Naive thymus-derived CD4-positive, alpha-beta T cell (primary cell): ENCODE measurements at regions of chr11 and their contacts with region 1.

Region 1: GRCh38 chr11:94493281-94494125 is at the starts of genes ANKRD49 and MRE11:
- DNase-seq: peak; percentile 92 to 98 (median 97)
- ATAC-seq: peak; percentile 100
- H3K4me3 ChIP-seq: peak within 1 kb of the TSS; percentile 94
- H3K4me3 Mint-ChIP-seq: peak within 1 kb of the TSS; percentile 92 to 99 (median 96)
- H3K27ac ChIP-seq: peak within 1 kb of the TSS; percentile 93
- H3K27ac Mint-ChIP-seq: peak within 1 kb of the TSS; percentile 91 to 99 (median 97)
- H3K4me1 ChIP-seq: peaks cover 18 to 28% of the 10 kb centered on the region in 2 donors
- H3K4me1 Mint-ChIP-seq: peaks cover 31 to 64% (median 42%) of the 10 kb centered on the region in 7 donors
- H3K27me3 ChIP-seq: no peaks in the 10 kb centered on the region
- H3K27me3 Mint-ChIP-seq: no peaks in the 10 kb centered on the region
- total RNA-seq, gene ANKRD49: 25.6 to 64.4 (median 44.5) TPM
- total RNA-seq, gene MRE11: 19.0 to 45.5 (median 40.1) TPM

Region 2: GRCh38 chr11:93197380-93198214 is 1295.9 kb before region 1 on chr11 and contains the start of gene SLC36A4:
- CTCF ChIA-PET with region 1: no interaction called
- POLR2A ChIA-PET with region 1: interaction called, 3 read pairs
- intact Hi-C with region 1: loop called (anchors 1 to 5 kb)
- DNase-seq: peak; percentile 78 to 90 (median 88)
- ATAC-seq: peak; percentile 94
- H3K4me3 ChIP-seq: peak within 1 kb of the TSS; percentile 54
- H3K4me3 Mint-ChIP-seq: peak within 1 kb of the TSS; percentile 88 to 98 (median 95)
- H3K27ac ChIP-seq: peak within 1 kb of the TSS; percentile 96
- H3K27ac Mint-ChIP-seq: peak within 1 kb of the TSS; percentile 87 to 99 (median 97)
- H3K4me1 ChIP-seq: peaks cover 0 to 4% of the 10 kb centered on the region in 2 donors
- H3K4me1 Mint-ChIP-seq: peaks cover 15 to 40% (median 30%) of the 10 kb centered on the region in 7 donors
- H3K27me3 ChIP-seq: no peaks in the 10 kb centered on the region
- H3K27me3 Mint-ChIP-seq: peaks cover 0 to 24% (median 5%) of the 10 kb centered on the region in 5 donors
- total RNA-seq, gene SLC36A4: 12.0 to 22.0 (median 20.0) TPM

Region 3: GRCh38 chr11:93741094-93741881 is 752.2 kb before region 1 on chr11 and contains the starts of genes C11orf54 and TAF1D:
- CTCF ChIA-PET with region 1: no interaction called
- POLR2A ChIA-PET with region 1: interaction called, 12 read pairs
- intact Hi-C with region 1: loop called (anchors 1 kb)
- DNase-seq: peak; percentile 85 to 98 (median 96)
- ATAC-seq: peak; percentile 96
- H3K4me3 ChIP-seq: peak within 1 kb of the TSS; percentile 88
- H3K4me3 Mint-ChIP-seq: peak within 1 kb of the TSS; percentile 95 to 100 (median 100)
- H3K27ac ChIP-seq: peak within 1 kb of the TSS; percentile 84
- H3K27ac Mint-ChIP-seq: peak within 1 kb of the TSS; percentile 98 to 100 (median 100)
- H3K4me1 ChIP-seq: peaks cover 28 to 31% of the 10 kb centered on the region in 2 donors
- H3K4me1 Mint-ChIP-seq: peaks cover 37 to 92% (median 71%) of the 10 kb centered on the region in 7 donors
- H3K27me3 ChIP-seq: no peaks in the 10 kb centered on the region
- H3K27me3 Mint-ChIP-seq: peaks cover 0 to 3% (median 0%) of the 10 kb centered on the region in 5 donors
- total RNA-seq, gene C11orf54: 16.4 to 42.5 (median 27.2) TPM
- total RNA-seq, gene TAF1D: 116 to 197 (median 183) TPM

Region 4: GRCh38 chr11:94020777-94021481 is 472.6 kb before region 1 on chr11 and contains the start of gene HEPHL1:
- CTCF ChIA-PET with region 1: no interaction called
- POLR2A ChIA-PET with region 1: no interaction called
- intact Hi-C with region 1: no loop called
- DNase-seq: no peak
- ATAC-seq: no peak
- H3K4me3 ChIP-seq: no peak within 1 kb of the TSS
- H3K4me3 Mint-ChIP-seq: no peak within 1 kb of the TSS
- H3K27ac ChIP-seq: no peak within 1 kb of the TSS
- H3K27ac Mint-ChIP-seq: no peak within 1 kb of the TSS
- H3K4me1 ChIP-seq: no peaks in the 10 kb centered on the region
- H3K4me1 Mint-ChIP-seq: no peaks in the 10 kb centered on the region
- H3K27me3 ChIP-seq: no peaks in the 10 kb centered on the region
- H3K27me3 Mint-ChIP-seq: peaks cover 0 to 20% (median 0%) of the 10 kb centered on the region in 5 donors
- total RNA-seq, gene HEPHL1: not detected

Region 5: DNA sequence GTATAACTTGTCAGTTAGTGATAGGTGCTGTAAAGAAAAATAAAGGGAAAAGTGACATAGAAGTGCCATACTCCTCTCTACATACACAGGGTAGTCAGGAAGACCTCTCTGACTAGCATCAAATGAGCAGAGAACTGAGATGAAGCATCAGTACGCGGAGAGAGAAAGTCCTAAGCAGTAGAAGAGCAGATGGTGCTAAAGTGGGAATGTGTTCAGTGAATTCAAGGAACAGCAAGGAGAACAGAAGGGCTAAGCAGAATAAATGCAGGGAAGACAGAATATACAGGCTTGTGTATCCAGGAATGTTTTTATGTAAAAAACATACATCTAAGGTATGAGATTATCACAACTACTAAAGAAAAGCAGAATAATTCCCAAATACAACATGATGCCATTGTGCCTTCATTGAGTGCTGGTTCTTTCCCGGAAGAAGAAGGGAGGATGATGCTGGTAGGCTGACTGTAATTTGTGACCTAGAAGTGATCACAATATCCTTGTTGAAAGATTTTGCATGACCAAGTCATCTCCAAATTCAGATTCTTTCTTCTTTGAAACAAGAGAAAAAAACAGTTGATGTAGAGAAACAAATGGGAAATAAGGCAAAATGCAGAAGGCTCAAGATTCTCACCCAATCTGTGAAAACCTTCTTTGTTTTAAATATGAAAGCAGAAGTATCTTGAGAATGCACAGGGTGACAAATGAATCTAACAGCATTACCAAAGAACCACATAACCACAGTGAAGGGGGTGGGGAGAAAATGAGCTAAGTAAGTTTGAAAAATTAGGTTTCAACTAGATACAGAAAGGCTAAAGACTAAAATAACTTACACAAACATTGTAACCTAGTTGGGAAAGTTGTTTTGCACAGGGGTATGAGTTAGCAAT is 20.3 kb before region 1 on chr11:
- CTCF ChIA-PET with region 1: no interaction called
- POLR2A ChIA-PET with region 1: no interaction called
- intact Hi-C with region 1: loop called in 1 of 2 experiments (anchors 1 kb)
- DNase-seq: no peak
- ATAC-seq: peak; percentile 83
- H3K4me3 ChIP-seq: no peak overlapping the region
- H3K4me3 Mint-ChIP-seq: peak overlapping the region in 2 of 10 donors; percentile 37 to 59
- H3K27ac ChIP-seq: no peak overlapping the region
- H3K27ac Mint-ChIP-seq: peak overlapping the region in 2 of 9 donors; percentile 10 to 85
- H3K4me1 ChIP-seq: no peaks in the 10 kb centered on the region
- H3K4me1 Mint-ChIP-seq: peaks cover 8 to 30% (median 18%) of the 10 kb centered on the region in 7 donors
- H3K27me3 ChIP-seq: no peaks in the 10 kb centered on the region
- H3K27me3 Mint-ChIP-seq: no peaks in the 10 kb centered on the region

Region 6: DNA sequence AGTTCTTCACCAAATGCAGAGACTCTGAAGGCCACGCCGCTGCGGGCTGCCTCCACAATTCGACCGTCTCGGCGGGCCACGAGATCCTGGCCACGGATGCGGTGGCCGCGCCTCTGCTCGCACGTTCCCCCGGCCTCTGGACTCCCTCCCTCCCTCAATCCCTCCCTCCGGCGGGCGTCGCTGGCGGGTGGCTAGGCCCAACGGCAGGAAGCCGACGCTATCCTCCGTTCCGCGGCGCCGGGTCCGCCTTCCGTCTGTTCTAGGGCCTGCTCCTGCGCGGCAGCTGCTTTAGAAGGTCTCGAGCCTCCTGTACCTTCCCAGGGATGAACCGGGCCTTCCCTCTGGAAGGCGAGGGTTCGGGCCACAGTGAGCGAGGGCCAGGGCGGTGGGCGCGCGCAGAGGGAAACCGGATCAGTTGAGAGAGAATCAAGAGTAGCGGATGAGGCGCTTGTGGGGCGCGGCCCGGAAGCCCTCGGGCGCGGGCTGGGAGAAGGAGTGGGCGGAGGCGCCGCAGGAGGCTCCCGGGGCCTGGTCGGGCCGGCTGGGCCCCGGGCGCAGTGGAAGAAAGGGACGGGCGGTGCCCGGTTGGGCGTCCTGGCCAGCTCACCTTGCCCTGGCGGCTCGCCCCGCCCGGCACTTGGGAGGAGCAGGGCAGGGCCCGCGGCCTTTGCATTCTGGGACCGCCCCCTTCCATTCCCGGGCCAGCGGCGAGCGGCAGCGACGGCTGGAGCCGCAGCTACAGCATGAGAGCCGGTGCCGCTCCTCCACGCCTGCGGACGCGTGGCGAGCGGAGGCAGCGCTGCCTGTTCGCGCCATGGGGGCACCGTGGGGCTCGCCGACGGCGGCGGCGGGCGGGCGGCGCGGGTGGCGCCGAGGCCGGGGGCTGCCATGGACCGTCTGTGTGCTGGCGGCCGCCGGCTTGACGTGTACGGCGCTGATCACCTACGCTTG is 50.5 kb after region 1 on chr11 and contains the start of gene FUT4:
- CTCF ChIA-PET with region 1: no interaction called
- POLR2A ChIA-PET with region 1: interaction called, 3 read pairs
- intact Hi-C with region 1: loop called (anchors 1 kb)
- DNase-seq: peak; percentile 51 to 83 (median 70)
- ATAC-seq: peak; percentile 84
- H3K4me3 ChIP-seq: peak within 1 kb of the TSS; percentile 85
- H3K4me3 Mint-ChIP-seq: peak within 1 kb of the TSS; percentile 93 to 100 (median 98)
- H3K27ac ChIP-seq: peak within 1 kb of the TSS; percentile 88
- H3K27ac Mint-ChIP-seq: peak within 1 kb of the TSS; percentile 96 to 100 (median 99)
- H3K4me1 ChIP-seq: peaks cover 22 to 29% of the 10 kb centered on the region in 2 donors
- H3K4me1 Mint-ChIP-seq: peaks cover 24 to 49% (median 41%) of the 10 kb centered on the region in 7 donors
- H3K27me3 ChIP-seq: no peaks in the 10 kb centered on the region
- H3K27me3 Mint-ChIP-seq: no peaks in the 10 kb centered on the region
- total RNA-seq, gene FUT4: 5.6 to 10.2 (median 6.9) TPM

Region 7: GRCh38 chr11:96389720-96390487 is 1896.4 kb after region 1 on chr11 and contains the starts of genes CCDC82 and JRKL:
- CTCF ChIA-PET with region 1: no interaction called
- POLR2A ChIA-PET with region 1: no interaction called
- intact Hi-C with region 1: loop called in 1 of 2 experiments (anchors 5 kb)
- DNase-seq: peak; percentile 96 to 99 (median 98)
- ATAC-seq: peak; percentile 99
- H3K4me3 ChIP-seq: peak within 1 kb of the TSS; percentile 66
- H3K4me3 Mint-ChIP-seq: peak within 1 kb of the TSS; percentile 84 to 99 (median 94)
- H3K27ac ChIP-seq: peak within 1 kb of the TSS; percentile 86
- H3K27ac Mint-ChIP-seq: peak within 1 kb of the TSS; percentile 71 to 97 (median 91)
- H3K4me1 ChIP-seq: peaks cover 17 to 18% of the 10 kb centered on the region in 2 donors
- H3K4me1 Mint-ChIP-seq: peaks cover 32 to 66% (median 60%) of the 10 kb centered on the region in 7 donors
- H3K27me3 ChIP-seq: no peaks in the 10 kb centered on the region
- H3K27me3 Mint-ChIP-seq: no peaks in the 10 kb centered on the region
- total RNA-seq, gene CCDC82: 21.9 to 46.2 (median 32.0) TPM
- total RNA-seq, gene JRKL: 5.4 to 17.3 (median 10.1) TPM